Heart left ventricle (tissue), 16 donors: ENCODE measurements at regions of chr20 and their contacts with region 1.

Region 1: GRCh38 chr20:15951658-15952057 is 621.6 kb downstream of the KIF16B start:
- DNase-seq: no peak
- ATAC-seq: no peak
- H3K4me3 ChIP-seq: no peak overlapping the region
- H3K27ac ChIP-seq: no peak overlapping the region
- H3K4me1 ChIP-seq: no peaks in the 10 kb centered on the region
- H3K27me3 ChIP-seq: no peaks in the 10 kb centered on the region
- CTCF ChIP-seq: no peak
- POLR2A ChIP-seq: no peak

Region 2: DNA sequence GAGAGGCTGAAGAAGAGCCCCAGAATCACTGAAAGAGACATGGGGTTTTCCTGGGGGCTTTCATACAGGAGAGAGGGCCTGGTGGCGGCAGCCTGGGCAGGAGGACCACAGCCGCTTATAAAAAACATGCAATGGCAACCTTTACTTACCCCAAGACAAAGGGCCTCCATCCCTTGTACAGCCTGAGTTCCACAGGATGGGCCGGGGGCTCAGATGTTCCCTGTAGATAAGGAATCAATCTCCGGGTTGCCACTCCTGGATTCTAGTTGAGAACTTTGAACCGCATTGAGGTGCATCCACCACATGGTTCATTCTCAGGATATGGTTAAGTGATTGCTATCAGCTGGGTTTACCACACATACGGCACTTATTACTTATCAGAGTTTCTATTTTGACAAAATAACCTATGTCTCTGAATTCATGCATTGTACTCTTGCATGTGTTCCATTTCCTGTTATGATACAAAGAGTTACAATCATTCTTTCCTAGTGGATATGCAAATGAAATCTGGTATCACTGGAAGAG is 56.0 kb before region 1 on chr20:
- intact Hi-C with region 1: loop called in 1 of 10 experiments (anchors 10 kb)
- DNase-seq: no peak
- ATAC-seq: no peak
- H3K4me3 ChIP-seq: no peak overlapping the region
- H3K27ac ChIP-seq: no peak overlapping the region
- H3K4me1 ChIP-seq: no peaks in the 10 kb centered on the region
- H3K27me3 ChIP-seq: no peaks in the 10 kb centered on the region
- CTCF ChIP-seq: no peak
- POLR2A ChIP-seq: no peak